Naive thymus-derived CD4-positive, alpha-beta T cell (primary cell): ENCODE measurements at regions of chr1 and their contacts with region 1.

Region 1: GRCh38 chr1:169586395-169587255 is at the start of gene F5:
- DNase-seq: peak; percentile 53 to 78 (median 74)
- ATAC-seq: peak; percentile 98
- H3K4me3 ChIP-seq: peak within 1 kb of the TSS; percentile 47
- H3K4me3 Mint-ChIP-seq: peak within 1 kb of the TSS; percentile 81 to 93 (median 90)
- H3K27ac ChIP-seq: peak within 1 kb of the TSS; percentile 66
- H3K27ac Mint-ChIP-seq: peak within 1 kb of the TSS; percentile 50 to 94 (median 86)
- H3K4me1 ChIP-seq: peaks cover 10 to 14% of the 10 kb centered on the region in 2 donors
- H3K4me1 Mint-ChIP-seq: peaks cover 18 to 71% (median 53%) of the 10 kb centered on the region in 7 donors
- H3K27me3 ChIP-seq: no peaks in the 10 kb centered on the region
- H3K27me3 Mint-ChIP-seq: peaks cover 0 to 4% (median 0%) of the 10 kb centered on the region in 5 donors
- total RNA-seq, gene F5: 3.7 to 14.6 (median 5.7) TPM

Region 2: DNA sequence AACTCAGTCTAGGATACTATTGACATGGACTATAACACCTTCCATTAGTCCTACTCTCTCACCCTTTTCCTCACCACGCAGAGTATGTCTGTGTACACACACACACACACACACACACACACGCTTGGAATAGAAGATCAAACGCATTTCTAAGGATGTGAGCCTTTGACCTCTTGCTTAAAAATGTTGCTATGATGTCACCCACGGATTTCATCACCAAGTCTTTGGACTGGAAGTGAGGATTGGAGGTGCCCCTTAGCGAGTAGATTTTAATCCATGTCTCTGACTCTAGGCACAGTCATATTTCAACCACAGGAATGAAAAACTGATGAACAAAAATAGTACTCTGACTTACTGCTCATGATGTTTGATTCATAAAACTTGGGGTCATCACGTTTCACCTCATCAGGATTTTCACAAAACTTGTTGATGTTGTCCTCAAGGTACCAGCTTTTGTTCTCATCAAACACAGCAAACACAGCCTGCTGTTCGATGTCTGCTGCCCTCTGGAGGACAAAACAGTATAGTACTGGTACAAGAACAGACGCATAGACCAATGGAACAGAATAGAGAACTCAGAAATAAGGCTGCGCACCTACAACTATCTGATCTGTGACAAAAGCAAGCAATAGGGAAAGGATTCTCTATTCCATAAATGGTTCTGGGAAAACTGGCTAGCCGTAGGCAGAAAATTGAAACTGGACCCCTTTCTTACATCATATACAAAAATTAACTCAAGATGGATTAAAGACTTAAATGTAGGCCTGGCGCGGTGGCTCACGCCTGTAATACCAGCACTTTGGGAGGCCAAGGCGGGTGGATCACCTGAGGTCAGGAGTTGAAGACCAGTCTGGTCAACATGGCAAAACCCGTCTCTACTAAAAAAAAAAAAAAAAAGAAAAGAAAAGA is 40.3 kb before region 1 on chr1:
- CTCF ChIA-PET with region 1: interaction called, 7 read pairs
- POLR2A ChIA-PET with region 1: interaction called, 3 read pairs
- intact Hi-C with region 1: loop called (anchors 1 to 5 kb)
- DNase-seq: peak in 7 of 9 donors; percentile 40 to 73 (median 68)
- ATAC-seq: peak; percentile 92
- H3K4me3 ChIP-seq: no peak overlapping the region
- H3K4me3 Mint-ChIP-seq: no peak overlapping the region
- H3K27ac ChIP-seq: no peak overlapping the region
- H3K27ac Mint-ChIP-seq: peak overlapping the region in 1 of 9 donors; percentile 7
- H3K4me1 ChIP-seq: no peaks in the 10 kb centered on the region
- H3K4me1 Mint-ChIP-seq: peaks cover 0 to 14% (median 0%) of the 10 kb centered on the region in 7 donors
- H3K27me3 ChIP-seq: no peaks in the 10 kb centered on the region
- H3K27me3 Mint-ChIP-seq: no peaks in the 10 kb centered on the region

Region 3: GRCh38 chr1:169630006-169630405 is 43.4 kb after region 1 on chr1 and contains the start of gene SELP:
- CTCF ChIA-PET with region 1: no interaction called
- POLR2A ChIA-PET with region 1: no interaction called
- intact Hi-C with region 1: no loop called
- DNase-seq: no peak
- ATAC-seq: no peak
- H3K4me3 ChIP-seq: no peak within 1 kb of the TSS
- H3K4me3 Mint-ChIP-seq: peak within 1 kb of the TSS in 4 of 10 donors; percentile 2 to 63 (median 23)
- H3K27ac ChIP-seq: no peak within 1 kb of the TSS
- H3K27ac Mint-ChIP-seq: peak within 1 kb of the TSS in 7 of 9 donors; percentile 32 to 88 (median 84)
- H3K4me1 ChIP-seq: peaks cover 0 to 51% of the 10 kb centered on the region in 2 donors
- H3K4me1 Mint-ChIP-seq: peaks cover 27 to 69% (median 58%) of the 10 kb centered on the region in 7 donors
- H3K27me3 ChIP-seq: no peaks in the 10 kb centered on the region
- H3K27me3 Mint-ChIP-seq: no peaks in the 10 kb centered on the region
- total RNA-seq, gene SELP: 0.27 to 3.2 (median 2.3) TPM

Region 4: DNA sequence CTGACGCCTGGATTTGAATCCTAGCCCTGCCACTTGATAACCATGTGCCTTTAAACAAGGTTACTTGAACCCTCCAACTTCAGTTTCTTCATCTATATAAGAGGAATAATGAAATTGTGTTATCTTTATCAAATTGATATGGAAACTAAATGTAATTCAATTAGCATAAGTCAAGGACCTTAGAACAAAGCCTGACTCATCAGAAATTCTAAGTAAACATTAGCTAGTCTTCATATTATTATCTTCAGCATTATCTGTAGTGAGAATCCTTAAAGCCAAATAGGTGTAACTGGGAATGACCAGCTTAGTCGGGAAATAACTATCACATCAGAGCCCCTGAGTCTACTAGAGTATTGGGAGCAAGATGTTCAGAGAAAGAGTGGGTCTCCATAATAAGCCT is 118.2 kb after region 1 on chr1:
- CTCF ChIA-PET with region 1: interaction called, 11 read pairs
- POLR2A ChIA-PET with region 1: interaction called, 5 read pairs
- intact Hi-C with region 1: no loop called
- DNase-seq: no peak
- ATAC-seq: no peak
- H3K4me3 ChIP-seq: peak overlapping the region; percentile 33
- H3K4me3 Mint-ChIP-seq: peak overlapping the region in 9 of 10 donors; percentile 50 to 99 (median 95)
- H3K27ac ChIP-seq: peak overlapping the region; percentile 70
- H3K27ac Mint-ChIP-seq: peak overlapping the region in 6 of 9 donors; percentile 75 to 97 (median 91)
- H3K4me1 ChIP-seq: peaks cover 53 to 76% of the 10 kb centered on the region in 2 donors
- H3K4me1 Mint-ChIP-seq: peaks cover 71 to 83% (median 72%) of the 10 kb centered on the region in 7 donors
- H3K27me3 ChIP-seq: no peaks in the 10 kb centered on the region
- H3K27me3 Mint-ChIP-seq: no peaks in the 10 kb centered on the region

Region 5: GRCh38 chr1:169809370-169810095 is 222.9 kb after region 1 on chr1:
- CTCF ChIA-PET with region 1: interaction called, 8 read pairs
- POLR2A ChIA-PET with region 1: interaction called, 4 read pairs
- intact Hi-C with region 1: loop called in 1 of 2 experiments (anchors 1 kb)
- DNase-seq: peak in 6 of 9 donors; percentile 3 to 44 (median 33)
- ATAC-seq: peak; percentile 65
- H3K4me3 ChIP-seq: no peak overlapping the region
- H3K4me3 Mint-ChIP-seq: no peak overlapping the region
- H3K27ac ChIP-seq: no peak overlapping the region
- H3K27ac Mint-ChIP-seq: no peak overlapping the region
- H3K4me1 ChIP-seq: no peaks in the 10 kb centered on the region
- H3K4me1 Mint-ChIP-seq: peaks cover 0 to 16% (median 0%) of the 10 kb centered on the region in 7 donors
- H3K27me3 ChIP-seq: no peaks in the 10 kb centered on the region
- H3K27me3 Mint-ChIP-seq: no peaks in the 10 kb centered on the region

Region 6: DNA sequence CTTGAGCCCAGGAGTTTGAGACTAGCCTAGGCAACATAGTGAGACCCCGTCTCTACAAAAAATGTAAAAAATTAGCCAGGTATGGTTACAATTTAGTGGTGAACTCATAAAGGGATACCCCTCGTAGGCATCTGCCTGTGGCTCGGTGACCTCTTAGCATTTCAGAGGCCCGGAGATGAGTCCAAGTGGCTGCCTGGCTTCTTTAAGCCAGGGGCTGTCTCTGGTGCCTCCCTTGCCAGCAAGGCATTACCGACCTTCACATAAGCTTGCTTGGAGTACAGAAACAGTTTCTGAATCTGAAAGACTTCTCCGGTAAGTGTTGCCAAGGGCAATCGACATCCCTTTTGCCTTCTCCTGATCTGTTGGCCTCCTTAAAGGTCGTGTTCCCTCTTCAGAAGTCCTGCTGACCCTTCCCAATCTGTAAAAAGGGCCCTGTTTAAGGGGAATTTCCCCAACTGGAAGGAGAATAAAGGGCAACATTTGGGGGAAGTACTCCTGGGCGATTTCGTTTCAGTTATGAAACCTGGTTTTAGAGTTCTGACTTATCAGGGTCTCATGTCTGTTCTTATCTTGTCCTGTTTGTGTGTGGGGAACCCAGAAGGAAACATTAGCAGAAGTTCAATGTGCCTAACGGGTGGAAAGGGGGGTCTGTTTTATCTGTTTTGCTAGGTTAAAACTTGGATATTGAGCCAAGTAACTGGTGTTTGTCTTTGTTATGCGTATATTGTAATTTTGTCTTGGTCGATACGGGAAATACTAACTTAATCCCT is 455.0 kb after region 1 on chr1:
- CTCF ChIA-PET with region 1: no interaction called
- POLR2A ChIA-PET with region 1: no interaction called
- intact Hi-C with region 1: no loop called
- DNase-seq: no peak
- ATAC-seq: no peak
- H3K4me3 ChIP-seq: no peak overlapping the region
- H3K4me3 Mint-ChIP-seq: no peak overlapping the region
- H3K27ac ChIP-seq: no peak overlapping the region
- H3K27ac Mint-ChIP-seq: no peak overlapping the region
- H3K4me1 ChIP-seq: no peaks in the 10 kb centered on the region
- H3K4me1 Mint-ChIP-seq: peaks cover 0 to 7% (median 0%) of the 10 kb centered on the region in 7 donors
- H3K27me3 ChIP-seq: no peaks in the 10 kb centered on the region
- H3K27me3 Mint-ChIP-seq: no peaks in the 10 kb centered on the region